Pancreas (tissue), 10 donors: ENCODE measurements at regions of chr18 and their contacts with region 1.

Region 1: DNA sequence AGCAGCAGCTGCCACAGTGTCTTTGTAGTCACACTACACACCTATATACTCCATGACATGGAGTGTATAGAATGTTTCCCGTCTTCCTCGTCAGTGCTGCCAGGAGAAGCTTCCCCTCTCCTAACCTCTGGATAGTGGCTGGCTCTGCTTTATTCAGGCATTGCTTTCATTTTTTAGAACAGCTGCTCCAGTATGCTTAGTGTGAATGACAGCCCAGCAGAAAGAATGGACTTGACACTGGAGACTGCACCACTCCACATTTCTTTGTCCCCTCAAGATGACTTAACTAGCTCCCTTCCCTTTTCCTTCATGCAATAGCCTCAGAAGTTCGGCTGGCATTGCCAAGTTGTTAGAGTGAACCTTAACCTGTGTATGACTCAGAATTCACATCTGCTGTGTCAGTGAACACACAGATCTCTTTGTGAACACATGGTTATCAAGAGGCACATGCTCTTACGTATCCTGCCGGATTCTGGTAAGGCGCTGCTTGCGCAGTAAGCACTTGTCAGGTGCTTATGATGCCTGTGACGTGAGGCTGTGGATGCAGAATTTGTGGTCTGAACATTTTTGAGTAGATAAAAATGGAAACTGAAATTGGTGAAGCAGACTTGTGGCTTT is 73.9 kb downstream of the NEDD4L start:
- DNase-seq: peak in 4 of 6 donors; percentile 69 to 85 (median 80)
- ATAC-seq: peak; percentile 89 to 96 (median 94)
- H3K4me3 ChIP-seq: no peak overlapping the region
- H3K27ac ChIP-seq: peak overlapping the region; percentile 20 to 79 (median 50)
- H3K4me1 ChIP-seq: peaks cover 8 to 45% (median 26%) of the 10 kb centered on the region in 3 donors
- H3K27me3 ChIP-seq: no peaks in the 10 kb centered on the region
- CTCF ChIP-seq: no peak

Region 2: GRCh38 chr18:58015065-58015780 is 102.7 kb before region 1 on chr18:
- intact Hi-C with region 1: no loop called
- DNase-seq: no peak
- ATAC-seq: peak in 1 of 4 donors; percentile 26
- H3K4me3 ChIP-seq: no peak overlapping the region
- H3K27ac ChIP-seq: no peak overlapping the region
- H3K4me1 ChIP-seq: peaks cover 12 to 17% (median 14%) of the 10 kb centered on the region in 3 donors
- H3K27me3 ChIP-seq: no peaks in the 10 kb centered on the region
- CTCF ChIP-seq: no peak

Region 3: GRCh38 chr18:58051765-58052460 is 66.0 kb before region 1 on chr18:
- intact Hi-C with region 1: loop called in 2 of 3 experiments (anchors 10 kb)
- DNase-seq: no peak
- ATAC-seq: peak in 3 of 4 donors; percentile 67 to 78 (median 76)
- H3K4me3 ChIP-seq: no peak overlapping the region
- H3K27ac ChIP-seq: peak overlapping the region in 2 of 4 donors; percentile 10 to 30
- H3K4me1 ChIP-seq: peaks cover 21 to 30% (median 21%) of the 10 kb centered on the region in 3 donors
- H3K27me3 ChIP-seq: no peaks in the 10 kb centered on the region
- CTCF ChIP-seq: no peak